ENCODE measurements at regions of chr2 and their contacts with region 1.

Region 1: GRCh38 chr2:182186132-182186735 is 200.6 kb downstream of the PPP1R1C start:
- DNase-seq: peak in 2 of 9 experiments; percentile 22 to 37
- ATAC-seq: no peak
- H3K4me3 ChIP-seq: no peak overlapping the region
- H3K4me3 Mint-ChIP-seq: no peak overlapping the region
- H3K27ac ChIP-seq: no peak overlapping the region
- H3K27ac Mint-ChIP-seq: no peak overlapping the region
- H3K4me1 ChIP-seq: no peaks in the 10 kb centered on the region
- H3K4me1 Mint-ChIP-seq: no peaks in the 10 kb centered on the region
- H3K27me3 ChIP-seq: no peaks in the 10 kb centered on the region
- H3K27me3 Mint-ChIP-seq: peaks cover 2% of the 10 kb centered on the region
- CTCF ChIP-seq: peak; percentile 99

Region 2: GRCh38 chr2:182482511-182482910 is 296.3 kb after region 1 on chr2:
- CTCF ChIA-PET with region 1: no interaction called
- POLR2A ChIA-PET with region 1: no interaction called
- intact Hi-C with region 1: no loop called
- DNase-seq: no peak
- ATAC-seq: no peak
- H3K4me3 ChIP-seq: no peak overlapping the region
- H3K4me3 Mint-ChIP-seq: no peak overlapping the region
- H3K27ac ChIP-seq: no peak overlapping the region
- H3K27ac Mint-ChIP-seq: no peak overlapping the region
- H3K4me1 ChIP-seq: no peaks in the 10 kb centered on the region
- H3K4me1 Mint-ChIP-seq: no peaks in the 10 kb centered on the region
- H3K27me3 ChIP-seq: no peaks in the 10 kb centered on the region
- H3K27me3 Mint-ChIP-seq: no peaks in the 10 kb centered on the region
- CTCF ChIP-seq: no peak

Region 3: DNA sequence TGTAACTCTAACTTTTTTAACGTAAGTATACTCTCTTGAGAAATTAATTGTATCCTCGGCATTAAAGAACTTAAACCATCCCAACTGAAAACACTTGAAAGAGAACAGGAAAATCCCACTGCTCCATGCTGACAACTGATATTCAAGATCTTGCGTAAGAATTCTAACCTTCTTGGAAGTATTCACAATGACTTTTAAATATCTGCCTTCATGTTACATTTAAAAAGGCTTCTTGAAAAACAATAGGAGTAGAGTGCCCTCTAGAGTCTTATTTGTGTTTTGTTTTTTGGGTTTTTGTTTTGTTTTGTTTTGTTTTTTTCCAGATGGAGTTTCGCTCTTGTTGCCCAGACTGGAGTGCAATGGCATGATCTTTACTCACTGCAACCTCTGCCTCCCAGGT is 464.5 kb after region 1 on chr2:
- CTCF ChIA-PET with region 1: no interaction called
- POLR2A ChIA-PET with region 1: no interaction called
- intact Hi-C with region 1: loop called (anchors 5 kb)
- DNase-seq: no peak
- ATAC-seq: no peak
- H3K4me3 ChIP-seq: no peak overlapping the region
- H3K4me3 Mint-ChIP-seq: no peak overlapping the region
- H3K27ac ChIP-seq: no peak overlapping the region
- H3K27ac Mint-ChIP-seq: no peak overlapping the region
- H3K4me1 ChIP-seq: no peaks in the 10 kb centered on the region
- H3K4me1 Mint-ChIP-seq: no peaks in the 10 kb centered on the region
- H3K27me3 ChIP-seq: no peaks in the 10 kb centered on the region
- H3K27me3 Mint-ChIP-seq: peaks cover 6% of the 10 kb centered on the region
- CTCF ChIP-seq: peak; percentile 26